A549 (cell line): ENCODE measurements at regions of chr1 and their contacts with region 1.

Region 1: DNA sequence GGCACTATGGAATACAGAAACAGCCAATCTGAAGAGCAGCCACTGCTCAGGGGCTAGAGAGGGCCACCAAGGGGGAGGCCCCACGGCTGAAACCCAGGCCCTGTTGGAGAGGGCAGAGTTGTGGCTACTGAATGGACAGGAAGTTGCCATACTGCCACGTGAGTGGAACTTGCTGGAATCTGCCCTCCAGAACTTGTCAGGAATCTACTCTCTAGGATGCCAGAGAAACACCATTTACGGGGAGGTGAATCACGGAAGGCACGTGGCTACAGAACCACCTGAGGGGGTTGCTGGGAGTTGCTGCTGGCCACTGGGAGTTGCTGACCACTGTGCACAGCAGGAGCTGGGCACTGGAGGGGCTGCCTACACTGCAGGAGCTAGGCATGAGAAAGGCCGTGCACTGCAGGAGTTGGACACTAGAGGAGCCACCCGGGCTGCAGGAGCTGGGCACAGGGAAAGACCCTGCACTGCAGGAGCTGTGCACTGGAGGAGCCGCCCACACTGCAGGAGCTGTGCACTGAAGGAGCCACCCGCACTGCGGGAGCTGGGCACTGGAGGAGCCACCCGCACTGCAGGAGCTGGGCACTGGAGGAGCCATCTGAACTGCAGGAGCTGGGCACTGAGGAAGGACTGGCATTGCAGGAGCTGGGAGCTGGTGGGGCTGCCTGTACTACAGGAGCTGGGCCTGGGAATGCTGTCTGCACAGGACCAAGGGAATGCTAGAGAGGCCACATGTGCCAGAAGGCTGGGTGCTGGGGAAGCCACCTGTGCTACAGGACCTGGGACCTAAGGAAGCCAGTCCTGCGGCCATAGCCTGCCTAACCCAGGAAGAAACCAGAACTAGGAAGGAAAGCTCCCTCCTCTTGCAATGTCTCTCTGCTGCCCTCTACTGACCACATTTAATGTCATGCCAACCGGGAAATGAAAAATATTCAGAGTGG is 343.4 kb downstream of the MATN1 start:
- DNase-seq: peak; percentile 64 to 76
- ATAC-seq: peak; percentile 81 to 94
- H3K4me3 ChIP-seq: no peak overlapping the region
- H3K27ac ChIP-seq: peak overlapping the region in 1 of 2 experiments; percentile 61; a peak in 1 of 6 replicates
- H3K4me1 ChIP-seq: no peaks in the 10 kb centered on the region
- CTCF ChIP-seq: peak; percentile 64
- EP300 ChIP-seq: no peak
- POLR2A ChIP-seq: no peak
- RAD21 ChIP-seq: peak; percentile 64 to 70

Region 2: DNA sequence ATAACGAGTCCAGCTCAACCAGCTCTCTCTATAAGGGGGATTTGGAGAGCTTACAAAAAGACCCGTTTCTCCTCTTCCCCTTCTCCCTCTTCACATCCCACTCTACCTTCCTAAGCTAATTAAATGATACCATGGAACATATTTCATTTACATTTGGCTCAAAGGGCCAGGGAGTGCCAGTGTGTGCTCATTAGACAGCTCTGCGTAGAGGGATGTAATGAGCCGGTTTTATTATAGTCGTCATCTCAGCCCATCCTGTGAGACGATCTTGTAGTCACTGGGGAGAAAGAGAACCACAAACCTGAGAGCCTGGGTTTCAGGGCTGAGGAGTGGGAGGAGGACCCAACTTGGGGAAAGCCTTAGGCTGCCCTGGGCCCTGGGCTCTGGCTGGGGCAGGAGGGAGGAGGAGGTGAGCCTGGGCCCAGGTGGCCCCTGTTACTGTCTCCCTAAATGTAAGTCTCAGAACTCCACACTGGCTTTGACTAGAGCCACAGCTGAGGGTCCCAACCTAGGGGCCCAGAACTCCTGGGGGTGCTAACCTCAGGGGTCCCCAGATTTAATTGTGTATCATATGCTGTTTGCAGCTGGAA is 11.2 kb before region 1 on chr1:
- CTCF ChIA-PET with region 1: interaction called, 15 read pairs
- POLR2A ChIA-PET with region 1: no interaction called
- DNase-seq: no peak
- ATAC-seq: no peak
- H3K4me3 ChIP-seq: no peak overlapping the region
- H3K27ac ChIP-seq: no peak overlapping the region
- H3K4me1 ChIP-seq: no peaks in the 10 kb centered on the region
- CTCF ChIP-seq: no peak
- EP300 ChIP-seq: no peak
- POLR2A ChIP-seq: no peak
- RAD21 ChIP-seq: no peak

Region 3: GRCh38 chr1:30399026-30399425 is 19.1 kb after region 1 on chr1:
- CTCF ChIA-PET with region 1: interaction called, 15 read pairs
- POLR2A ChIA-PET with region 1: no interaction called
- DNase-seq: no peak
- ATAC-seq: no peak
- H3K4me3 ChIP-seq: no peak overlapping the region
- H3K27ac ChIP-seq: no peak overlapping the region
- H3K4me1 ChIP-seq: no peaks in the 10 kb centered on the region
- CTCF ChIP-seq: no peak
- EP300 ChIP-seq: no peak
- POLR2A ChIP-seq: no peak
- RAD21 ChIP-seq: no peak

Region 4: DNA sequence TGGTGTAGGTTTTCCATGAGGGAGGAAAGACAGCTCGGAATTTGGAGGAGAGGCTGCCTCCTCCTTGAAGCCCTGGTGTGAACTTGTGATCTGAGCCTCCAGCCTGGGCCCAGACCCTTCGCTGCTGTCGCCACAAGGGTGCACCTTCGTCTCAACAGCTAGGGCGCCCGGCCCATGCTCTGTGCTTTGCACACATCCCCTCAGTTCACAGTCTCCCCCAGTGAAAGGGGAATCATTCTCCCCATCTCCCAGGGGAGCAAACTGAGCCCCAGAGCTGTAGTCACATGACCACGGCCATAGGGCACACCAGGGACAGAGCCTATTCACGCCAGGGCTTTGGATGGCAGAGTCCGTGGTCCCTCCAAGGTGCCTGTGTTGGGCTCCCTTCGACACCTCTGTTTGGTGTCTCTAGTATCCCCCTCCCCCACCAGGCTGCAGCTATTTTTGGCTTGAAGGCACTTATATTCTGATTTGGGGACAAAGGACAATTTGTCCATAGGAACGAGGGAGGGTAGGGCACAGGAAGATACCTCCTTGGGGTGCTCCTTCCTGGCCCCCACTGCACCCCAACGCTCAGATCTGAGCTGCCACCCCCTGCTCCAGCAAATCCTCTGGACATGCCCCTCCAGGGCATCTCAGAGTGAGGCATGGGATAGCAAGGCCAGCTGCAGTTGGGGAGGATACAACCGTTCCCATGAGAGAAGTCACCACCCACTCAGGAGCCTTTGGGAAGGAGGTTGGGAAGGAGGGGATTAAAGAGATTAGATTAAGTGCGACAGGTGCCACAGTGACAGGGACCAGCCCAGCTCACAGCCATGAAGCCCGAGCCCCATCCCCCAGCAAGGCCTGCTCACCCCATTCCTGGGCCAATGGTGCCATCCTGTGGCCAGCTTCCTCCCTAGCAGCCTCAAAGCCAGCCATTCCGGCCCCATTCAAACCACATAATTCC is 327.7 kb after region 1 on chr1:
- CTCF ChIA-PET with region 1: interaction called, 11 read pairs
- POLR2A ChIA-PET with region 1: interaction called, 3 read pairs
- DNase-seq: peak; percentile 57 to 69
- ATAC-seq: peak; percentile 77 to 93
- H3K4me3 ChIP-seq: no peak overlapping the region
- H3K27ac ChIP-seq: no peak overlapping the region
- H3K4me1 ChIP-seq: 0 out of 3 replicates have a peak, but pooled peaks cover 3% of the 10 kb centered on the region
- CTCF ChIP-seq: peak; percentile 83
- EP300 ChIP-seq: no peak
- POLR2A ChIP-seq: no peak
- RAD21 ChIP-seq: peak; percentile 94 to 95